ENCODE measurements at regions of chr15 and their contacts with region 1.

Region 1: DNA sequence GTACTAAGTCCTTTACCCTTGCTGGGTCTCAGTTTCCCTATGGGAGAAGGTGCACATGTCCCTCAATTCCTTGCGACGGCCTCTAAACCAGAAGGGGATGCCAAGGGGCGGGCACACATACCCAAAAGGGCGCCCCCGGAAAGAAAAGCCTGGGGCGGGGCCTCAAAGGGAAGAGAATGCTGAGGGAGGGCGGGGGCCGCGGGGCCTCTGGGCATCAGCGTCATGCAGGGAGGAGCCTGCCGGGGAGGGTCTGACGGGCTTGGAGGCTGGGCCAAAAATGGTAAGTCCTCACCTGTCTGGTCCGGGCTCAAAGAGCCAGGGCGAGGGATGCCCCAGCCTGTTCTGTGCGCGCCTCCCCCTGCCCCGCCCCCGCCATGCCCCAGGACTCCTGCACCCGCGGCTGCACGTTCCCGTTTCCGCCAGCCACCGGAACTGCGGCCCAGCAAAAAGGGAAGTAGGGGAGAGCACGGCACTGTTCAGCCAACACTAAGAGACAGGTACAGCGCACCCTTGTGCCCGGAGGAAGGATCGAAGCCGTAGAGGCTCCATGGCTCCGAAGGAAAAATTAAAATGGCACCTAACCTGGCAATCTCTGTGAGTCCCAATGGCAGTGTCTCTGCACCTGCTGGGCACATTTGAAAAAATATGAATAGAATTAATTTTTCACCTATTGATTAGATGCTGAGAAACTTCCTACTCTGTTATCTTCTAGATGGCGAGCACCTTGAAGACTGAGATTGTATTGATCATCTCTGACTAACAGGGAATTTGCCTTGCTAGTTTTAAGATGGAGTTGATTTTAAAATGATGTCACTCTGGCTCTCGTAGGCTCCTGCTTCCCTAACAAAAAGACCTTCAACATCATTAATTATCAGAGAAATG is at the start of gene DET1:
- DNase-seq: peak; percentile 87 to 98 (median 94)
- ATAC-seq: peak; percentile 91
- H3K4me3 ChIP-seq: peak within 1 kb of the TSS; percentile 60 to 62
- H3K4me3 Mint-ChIP-seq: peak within 1 kb of the TSS; percentile 91
- H3K27ac ChIP-seq: peak within 1 kb of the TSS; percentile 72 to 80
- H3K27ac Mint-ChIP-seq: peak within 1 kb of the TSS; percentile 96
- H3K4me1 ChIP-seq: peaks cover 6% of the 10 kb centered on the region
- H3K4me1 Mint-ChIP-seq: peaks cover 18% of the 10 kb centered on the region
- H3K27me3 ChIP-seq: no peaks in the 10 kb centered on the region
- H3K27me3 Mint-ChIP-seq: no peaks in the 10 kb centered on the region
- CTCF ChIP-seq: peak; percentile 70
- total RNA-seq, gene DET1: 1.4 to 2.0 TPM

Region 2: DNA sequence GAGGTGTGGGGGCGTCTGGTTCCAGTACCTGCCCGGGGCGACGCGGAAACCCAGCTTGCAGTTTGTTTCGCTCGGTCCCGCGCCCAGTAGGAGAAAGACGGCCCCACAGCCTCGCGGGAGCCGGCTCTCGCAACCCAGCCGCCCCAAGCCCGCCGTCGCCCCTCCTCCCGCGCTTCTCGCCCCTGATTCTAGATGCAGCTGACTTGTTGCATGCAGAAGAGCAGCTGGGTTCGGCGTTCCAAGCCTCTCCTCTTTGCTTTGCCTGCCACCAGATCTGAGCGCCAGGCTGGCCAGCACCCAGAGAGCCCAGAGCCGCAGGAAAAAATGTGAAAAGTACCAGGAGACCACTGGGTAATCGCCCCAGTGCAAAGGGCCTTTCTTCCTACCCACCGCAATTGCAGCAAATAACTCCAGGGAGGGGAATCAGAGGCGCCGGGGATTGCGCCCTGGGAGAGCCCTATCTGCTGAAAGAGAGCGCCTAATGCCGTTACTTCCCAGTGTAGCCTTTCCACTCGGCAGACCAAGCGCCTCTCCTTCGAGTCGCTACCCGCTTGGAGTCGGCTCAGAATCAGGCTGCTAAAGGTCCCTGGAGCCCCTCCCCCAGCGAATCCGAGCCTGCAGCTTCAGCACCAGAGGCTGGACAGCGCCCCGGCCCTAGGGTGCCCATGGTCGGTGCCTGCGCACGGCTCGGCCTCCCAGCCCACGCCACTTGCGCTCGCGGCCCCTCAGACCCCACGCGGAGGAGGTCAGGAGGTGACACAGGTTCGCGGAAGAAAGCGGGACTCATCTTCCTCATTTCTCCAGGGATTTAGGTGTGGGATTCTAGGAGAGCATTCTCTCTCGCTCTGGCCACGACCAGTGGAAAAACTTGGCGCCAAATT is 58.9 kb after region 1 on chr15:
- CTCF ChIA-PET with region 1: no interaction called
- POLR2A ChIA-PET with region 1: no interaction called
- intact Hi-C with region 1: loop called in 1 of 2 experiments (anchors 5 kb)
- DNase-seq: peak in 6 of 9 experiments; percentile 47 to 59 (median 54)
- ATAC-seq: peak; percentile 81
- H3K4me3 ChIP-seq: no peak overlapping the region
- H3K4me3 Mint-ChIP-seq: no peak overlapping the region
- H3K27ac ChIP-seq: no peak overlapping the region
- H3K27ac Mint-ChIP-seq: no peak overlapping the region
- H3K4me1 ChIP-seq: peaks cover 17% of the 10 kb centered on the region
- H3K4me1 Mint-ChIP-seq: peaks cover 16% of the 10 kb centered on the region
- H3K27me3 ChIP-seq: peaks cover 28 to 43% of the 10 kb centered on the region in 2 experiments
- H3K27me3 Mint-ChIP-seq: peaks cover 67% of the 10 kb centered on the region
- CTCF ChIP-seq: no peak

Region 3: DNA sequence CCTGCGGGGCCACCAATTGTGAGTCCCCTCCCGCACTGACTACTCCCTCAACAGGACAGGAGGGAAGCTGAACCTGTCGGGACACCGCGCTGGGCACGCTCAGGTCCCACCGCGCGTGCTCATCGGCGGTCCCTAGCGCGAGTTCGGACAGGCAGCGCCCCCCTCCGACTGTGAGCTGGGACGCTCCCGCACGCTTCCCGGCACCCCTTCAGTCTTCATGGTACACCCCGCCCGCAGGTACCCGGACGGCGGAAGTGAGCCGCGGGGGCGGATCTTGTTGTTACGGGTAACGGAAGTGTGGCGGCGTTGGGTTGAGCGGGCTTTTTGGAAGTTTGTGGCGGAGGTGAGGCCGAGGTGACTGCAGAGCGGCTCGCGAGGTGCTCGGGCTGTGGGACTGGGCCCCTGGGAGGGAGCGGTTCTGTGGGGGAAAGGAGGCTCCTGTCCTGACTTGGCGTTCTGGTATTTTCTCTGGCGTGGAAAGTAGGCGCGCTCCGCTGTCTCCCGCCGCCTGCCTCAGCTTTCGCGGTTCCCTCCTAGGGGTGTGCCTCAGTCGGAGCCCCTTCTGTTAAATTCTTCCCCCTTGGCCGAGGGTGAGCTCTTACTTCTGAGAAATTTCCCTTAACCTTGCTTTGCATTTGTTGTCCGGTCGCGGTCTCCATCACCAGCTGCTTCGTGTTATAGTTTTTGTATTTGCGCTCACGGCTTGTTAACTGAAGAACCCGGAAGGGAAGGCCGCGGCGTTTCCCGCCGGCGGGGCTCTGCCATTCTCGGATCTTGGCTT is 697.4 kb after region 1 on chr15 and contains the start of gene FANCI:
- CTCF ChIA-PET with region 1: no interaction called
- POLR2A ChIA-PET with region 1: no interaction called
- intact Hi-C with region 1: loop called (anchors 2 to 5 kb)
- DNase-seq: peak; percentile 93 to 98 (median 97)
- ATAC-seq: peak; percentile 98
- H3K4me3 ChIP-seq: peak within 1 kb of the TSS; percentile 77 to 85
- H3K4me3 Mint-ChIP-seq: peak within 1 kb of the TSS; percentile 95
- H3K27ac ChIP-seq: peak within 1 kb of the TSS; percentile 24 to 52
- H3K27ac Mint-ChIP-seq: peak within 1 kb of the TSS; percentile 90
- H3K4me1 ChIP-seq: peaks cover 15% of the 10 kb centered on the region
- H3K4me1 Mint-ChIP-seq: peaks cover 25% of the 10 kb centered on the region
- H3K27me3 ChIP-seq: no peaks in the 10 kb centered on the region
- H3K27me3 Mint-ChIP-seq: no peaks in the 10 kb centered on the region
- CTCF ChIP-seq: no peak
- total RNA-seq, gene FANCI: 5.1 to 6.3 TPM

Measured in CD8-positive, alpha-beta T cell (primary cell).